OCI-LY7 (cell line): ENCODE measurements at regions of chr5 and their contacts with region 1.

Region 1: GRCh38 chr5:141811287-141812155 is 66.7 kb downstream of the PCDH1 start:
- DNase-seq: peak; percentile 49
- H3K4me3 ChIP-seq: no peak overlapping the region
- H3K27ac ChIP-seq: no peak overlapping the region
- H3K4me1 ChIP-seq: peaks cover 12% of the 10 kb centered on the region
- CTCF ChIP-seq: peak; percentile 83

Region 2: GRCh38 chr5:141650851-141651727 is 160.4 kb before region 1 on chr5 and contains the start of gene FCHSD1:
- CTCF ChIA-PET with region 1: no interaction called
- POLR2A ChIA-PET with region 1: no interaction called
- intact Hi-C with region 1: no loop called
- DNase-seq: peak; percentile 87
- H3K4me3 ChIP-seq: peak within 1 kb of the TSS; percentile 73
- H3K27ac ChIP-seq: no peak within 1 kb of the TSS
- H3K4me1 ChIP-seq: peaks cover 13% of the 10 kb centered on the region
- CTCF ChIP-seq: no peak
- total RNA-seq, gene FCHSD1: 31.9 and 49.0 TPM in 2 replicates

Region 3: DNA sequence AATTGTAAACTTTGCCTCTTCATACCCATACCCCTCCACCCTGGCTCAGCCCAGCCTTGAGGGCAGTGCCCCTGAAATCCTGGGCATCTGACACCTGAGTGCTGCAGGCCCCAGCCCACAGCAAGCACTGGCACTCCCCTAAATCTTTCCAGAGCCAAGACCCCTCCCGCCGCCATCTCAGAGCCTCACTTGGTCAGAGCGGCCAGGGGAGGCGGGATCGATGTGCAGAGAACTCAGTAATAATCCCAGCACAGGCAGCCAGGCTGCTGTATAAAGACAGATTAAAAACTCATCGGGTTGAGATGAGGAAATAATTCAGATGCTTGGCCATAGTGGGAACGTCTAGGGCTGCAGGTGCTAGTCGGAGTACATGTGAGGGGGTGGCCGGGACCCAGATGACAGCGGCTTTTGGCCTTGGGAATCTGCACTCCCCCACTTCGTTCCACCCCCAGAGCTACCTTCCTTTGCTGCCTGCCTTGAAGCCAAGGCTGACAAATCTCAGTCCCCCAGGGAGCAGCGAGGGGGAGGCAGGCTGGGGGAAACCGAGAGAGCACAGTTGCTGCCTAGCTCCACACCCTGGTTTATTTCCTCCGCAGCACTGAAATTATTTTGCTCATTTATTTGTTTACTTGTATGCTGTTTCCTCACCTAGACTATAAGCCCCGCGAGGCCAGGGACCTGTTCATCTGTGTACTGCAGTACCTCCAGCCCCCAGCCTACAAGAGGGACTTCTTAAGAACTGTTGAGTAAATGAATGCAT is 110.0 kb before region 1 on chr5:
- CTCF ChIA-PET with region 1: no interaction called
- POLR2A ChIA-PET with region 1: no interaction called
- intact Hi-C with region 1: loop called (anchors 1 kb)
- DNase-seq: no peak
- H3K4me3 ChIP-seq: no peak overlapping the region
- H3K27ac ChIP-seq: no peak overlapping the region
- H3K4me1 ChIP-seq: no peaks in the 10 kb centered on the region
- CTCF ChIP-seq: no peak